OCI-LY7 (cell line): ENCODE measurements at regions of chr11 and their contacts with region 1.

Region 1: DNA sequence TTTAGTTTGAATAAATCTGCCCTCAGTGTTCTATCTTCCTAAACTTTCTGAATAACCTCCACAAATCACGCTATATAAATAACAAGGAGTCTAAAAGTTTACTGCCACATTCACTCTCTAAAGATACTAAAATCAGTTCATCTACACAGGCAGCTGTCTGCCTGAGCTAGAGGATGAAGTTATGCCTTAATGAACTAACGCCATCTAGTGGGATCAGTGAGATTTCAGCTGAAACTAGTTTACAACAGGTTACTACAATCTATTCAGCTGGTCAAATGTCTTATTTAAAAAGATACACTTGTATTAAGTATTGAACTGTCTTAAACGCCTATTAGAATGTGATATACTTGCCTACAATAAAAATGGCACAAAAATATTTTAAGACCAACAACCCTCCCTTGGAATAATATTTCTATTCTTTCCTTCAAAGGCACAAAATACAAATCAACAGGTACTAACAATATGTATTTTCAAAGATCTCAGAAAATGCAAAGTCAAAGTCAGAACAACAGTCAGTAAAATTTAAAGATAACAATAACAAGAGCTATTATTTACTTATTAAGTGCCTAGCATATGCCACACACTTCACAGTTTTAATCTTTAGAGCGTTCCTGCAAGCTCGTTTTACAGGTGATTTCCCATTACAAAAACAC is 84.1 kb downstream of the LARGE2 start:
- DNase-seq: peak; percentile 83
- H3K4me3 ChIP-seq: no peak overlapping the region
- H3K27ac ChIP-seq: no peak overlapping the region
- H3K4me1 ChIP-seq: no peaks in the 10 kb centered on the region
- CTCF ChIP-seq: peak; percentile 98

Region 2: GRCh38 chr11:45754261-45754709 is 252.3 kb before region 1 on chr11:
- CTCF ChIA-PET with region 1: no interaction called
- POLR2A ChIA-PET with region 1: no interaction called
- intact Hi-C with region 1: no loop called
- DNase-seq: no peak
- H3K4me3 ChIP-seq: no peak overlapping the region
- H3K27ac ChIP-seq: no peak overlapping the region
- H3K4me1 ChIP-seq: no peaks in the 10 kb centered on the region
- CTCF ChIP-seq: no peak

Region 3: DNA sequence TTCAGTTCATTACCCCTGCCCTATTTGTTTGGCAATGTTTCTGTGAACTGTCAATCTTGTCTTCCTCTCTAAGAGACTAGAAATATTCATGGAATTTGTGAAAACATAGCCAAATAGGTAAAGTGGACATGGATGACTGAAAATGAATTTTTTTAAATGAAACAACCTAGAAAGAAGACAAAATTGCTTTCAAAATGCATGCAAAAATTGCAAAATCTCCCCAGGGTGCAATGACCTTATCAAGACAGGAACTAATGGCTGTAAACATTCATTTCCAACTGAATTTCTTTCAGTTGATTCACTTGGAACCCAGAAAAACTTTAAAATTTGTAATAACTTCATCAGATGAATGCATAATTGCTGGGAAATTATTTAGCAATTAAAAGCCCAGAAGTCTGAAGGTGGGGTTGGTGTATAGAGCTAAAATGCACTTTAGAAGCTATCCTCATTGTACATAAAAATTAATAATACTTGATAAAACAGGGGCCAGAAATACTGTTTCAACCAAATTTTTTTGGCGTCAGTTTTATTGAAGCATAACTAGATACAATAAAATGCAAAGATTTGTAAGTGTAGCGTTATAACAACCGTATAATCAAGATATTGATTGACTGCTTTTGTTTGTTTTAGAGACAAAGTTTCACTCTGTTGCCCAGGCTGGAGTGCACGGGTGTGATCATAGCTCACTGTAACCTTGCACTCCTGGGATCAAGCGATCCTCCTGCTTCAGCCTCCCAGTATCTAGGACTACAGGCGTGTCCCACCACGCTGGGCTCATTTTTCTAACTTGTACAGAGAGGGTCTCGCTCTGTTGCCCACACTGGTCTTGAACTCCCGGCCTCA is 229.2 kb before region 1 on chr11:
- CTCF ChIA-PET with region 1: no interaction called
- POLR2A ChIA-PET with region 1: no interaction called
- intact Hi-C with region 1: no loop called
- DNase-seq: no peak
- H3K4me3 ChIP-seq: no peak overlapping the region
- H3K27ac ChIP-seq: no peak overlapping the region
- H3K4me1 ChIP-seq: peaks cover 4% of the 10 kb centered on the region
- CTCF ChIP-seq: no peak

Region 4: GRCh38 chr11:45872513-45873356 is 133.8 kb before region 1 on chr11:
- CTCF ChIA-PET with region 1: interaction called, 8 read pairs
- POLR2A ChIA-PET with region 1: interaction called, 3 read pairs
- intact Hi-C with region 1: loop called (anchors 1 kb)
- DNase-seq: peak; percentile 55
- H3K4me3 ChIP-seq: no peak overlapping the region
- H3K27ac ChIP-seq: no peak overlapping the region
- H3K4me1 ChIP-seq: no peaks in the 10 kb centered on the region
- CTCF ChIP-seq: peak; percentile 71

Region 5: GRCh38 chr11:45930031-45930794 is 76.3 kb before region 1 on chr11:
- CTCF ChIA-PET with region 1: no interaction called
- POLR2A ChIA-PET with region 1: interaction called, 6 read pairs
- intact Hi-C with region 1: loop called (anchors 2 kb)
- DNase-seq: peak; percentile 96
- H3K4me3 ChIP-seq: peak overlapping the region; percentile 72
- H3K27ac ChIP-seq: peak overlapping the region; percentile 95
- H3K4me1 ChIP-seq: peaks cover 63% of the 10 kb centered on the region
- CTCF ChIP-seq: no peak

Region 6: DNA sequence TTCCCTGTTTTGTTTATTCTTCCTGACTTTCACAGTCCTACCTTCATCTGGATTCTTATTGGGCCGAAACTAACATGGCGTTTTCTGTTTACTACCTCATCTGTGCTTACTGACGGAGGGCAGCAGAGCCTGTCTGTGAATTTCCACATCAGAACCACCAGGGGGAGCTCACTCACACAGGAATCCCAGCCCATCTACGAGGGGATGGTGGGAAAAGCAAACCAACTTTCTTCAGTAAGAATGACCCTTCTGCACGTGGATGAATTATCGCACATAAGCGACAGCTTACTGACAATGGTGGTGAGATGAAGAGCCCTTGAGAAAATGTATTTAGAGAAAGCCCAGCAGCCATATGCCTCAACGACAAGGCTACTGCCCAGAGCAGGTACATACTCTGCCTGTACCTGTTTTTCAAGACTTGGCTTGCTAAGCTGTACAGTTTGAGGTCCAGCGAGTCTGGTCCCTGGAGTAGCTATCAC is 41.6 kb before region 1 on chr11:
- CTCF ChIA-PET with region 1: interaction called, 4 read pairs
- POLR2A ChIA-PET with region 1: interaction called, 3 read pairs
- intact Hi-C with region 1: loop called (anchors 2 kb)
- DNase-seq: peak; percentile 71
- H3K4me3 ChIP-seq: no peak overlapping the region
- H3K27ac ChIP-seq: no peak overlapping the region
- H3K4me1 ChIP-seq: no peaks in the 10 kb centered on the region
- CTCF ChIP-seq: peak; percentile 99

Region 7: DNA sequence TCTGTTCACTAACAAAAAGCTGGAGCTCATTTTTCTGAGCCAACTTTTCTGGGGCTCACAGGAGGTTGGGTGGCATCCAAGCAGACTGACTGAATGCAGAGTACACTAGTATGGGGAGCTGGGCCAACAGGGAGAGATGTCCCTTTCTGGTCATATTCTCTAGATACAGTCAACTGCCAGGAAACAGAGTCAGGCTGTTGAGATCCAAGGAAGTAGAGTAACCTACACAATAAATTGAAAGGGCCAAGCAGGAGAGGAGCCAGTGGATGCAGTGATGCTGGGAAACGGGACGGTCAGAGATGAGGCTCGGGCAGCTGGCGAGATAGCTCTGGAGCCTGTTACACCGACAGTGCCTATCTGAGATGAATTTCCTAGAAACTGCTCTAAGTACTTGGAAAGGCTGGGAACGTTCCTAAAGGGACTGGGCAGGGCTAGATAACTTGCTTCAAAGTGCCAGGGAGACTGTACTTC is 13.0 kb before region 1 on chr11:
- CTCF ChIA-PET with region 1: no interaction called
- POLR2A ChIA-PET with region 1: interaction called, 11 read pairs
- intact Hi-C with region 1: no loop called
- DNase-seq: no peak
- H3K4me3 ChIP-seq: no peak overlapping the region
- H3K27ac ChIP-seq: no peak overlapping the region
- H3K4me1 ChIP-seq: no peaks in the 10 kb centered on the region
- CTCF ChIP-seq: no peak